ENCODE measurements at regions of chr20 and their contacts with region 1.

Region 1: DNA sequence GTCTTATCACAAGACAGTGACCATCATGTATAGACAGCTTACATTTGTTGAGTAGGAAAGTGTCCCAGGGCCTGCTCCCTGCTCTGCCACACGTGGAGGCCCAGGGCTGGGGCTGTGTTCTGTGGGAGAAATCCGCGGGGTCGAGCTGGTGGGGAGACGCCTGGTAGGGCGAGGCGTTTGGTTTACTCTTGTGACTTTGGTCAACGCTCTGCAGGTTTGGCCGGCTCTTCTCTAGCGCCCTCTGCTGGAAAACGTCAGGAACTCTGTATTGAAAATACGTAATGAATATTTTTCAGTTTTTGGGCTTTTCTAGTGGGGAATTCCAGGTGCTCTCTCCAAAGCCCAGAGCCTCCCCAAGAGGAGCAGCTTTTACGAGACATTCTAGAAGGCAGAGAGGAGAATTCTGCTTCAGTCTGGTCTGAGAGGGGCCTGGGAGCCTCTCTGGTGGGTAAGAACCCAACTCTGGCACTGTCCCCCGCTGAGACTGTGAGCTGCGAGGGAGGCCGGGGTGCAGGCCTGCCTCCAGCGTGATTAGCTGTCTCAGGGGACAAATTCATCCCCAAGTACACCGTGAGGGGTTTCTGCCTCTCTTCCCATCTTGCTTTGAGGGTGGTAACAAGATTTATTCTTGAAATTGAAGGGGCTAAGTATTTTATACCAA is 112.6 kb upstream of the RALGAPA2 start:
- DNase-seq: peak; percentile 2
- ATAC-seq: peak; percentile 53
- H3K4me3 ChIP-seq: no peak overlapping the region
- H3K27ac ChIP-seq: no peak overlapping the region
- H3K4me1 ChIP-seq: no peaks in the 10 kb centered on the region
- H3K27me3 ChIP-seq: no peaks in the 10 kb centered on the region
- CTCF ChIP-seq: peak; percentile 58
- POLR2A ChIP-seq: no peak
- RAD21 ChIP-seq: peak; percentile 36

Region 2: DNA sequence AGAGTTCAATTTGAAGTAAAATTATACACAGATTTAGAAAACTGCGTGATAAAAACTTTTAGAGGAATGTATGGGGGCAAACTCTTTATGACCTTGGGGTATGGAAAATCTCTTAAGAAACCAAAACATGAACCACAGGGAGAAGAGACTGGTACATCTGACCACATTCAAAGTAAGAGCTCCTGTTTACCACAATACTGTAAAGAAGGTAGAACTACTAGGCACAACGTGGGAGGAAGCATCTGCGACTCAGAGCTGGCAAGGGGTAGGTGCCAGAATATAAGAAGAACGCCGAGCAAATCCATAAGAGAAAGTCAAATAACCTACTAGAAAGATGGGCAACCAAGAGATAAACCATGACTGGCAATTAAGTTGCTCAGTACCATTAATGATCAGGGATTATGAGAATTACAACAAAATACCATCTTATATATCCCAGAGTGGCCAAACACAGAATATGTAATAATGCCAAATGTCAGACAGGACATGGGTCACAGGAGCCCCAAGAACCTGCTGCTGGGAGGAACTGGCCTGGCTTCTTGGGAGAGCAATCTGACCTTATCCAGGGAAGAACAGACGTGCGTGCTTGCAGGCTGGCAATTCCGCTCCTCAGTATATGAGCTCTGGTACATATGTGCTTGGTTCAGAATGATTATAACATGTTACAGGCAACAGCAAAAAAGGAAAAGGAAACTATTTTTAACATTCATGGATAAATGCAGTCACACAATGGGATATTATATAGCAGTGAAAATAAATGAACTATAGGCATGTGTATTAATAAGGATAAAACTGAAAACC is 407.0 kb before region 1 on chr20:
- CTCF ChIA-PET with region 1: no interaction called
- POLR2A ChIA-PET with region 1: no interaction called
- dilution Hi-C with region 1: no loop called
- in situ Hi-C with region 1: no loop called
- intact Hi-C with region 1: no loop called
- DNase-seq: no peak
- ATAC-seq: no peak
- H3K4me3 ChIP-seq: no peak overlapping the region
- H3K27ac ChIP-seq: no peak overlapping the region
- H3K4me1 ChIP-seq: no peaks in the 10 kb centered on the region
- H3K27me3 ChIP-seq: no peaks in the 10 kb centered on the region; the same call in 1 of the 2 replicates
- CTCF ChIP-seq: no peak
- POLR2A ChIP-seq: no peak
- RAD21 ChIP-seq: no peak

Region 3: DNA sequence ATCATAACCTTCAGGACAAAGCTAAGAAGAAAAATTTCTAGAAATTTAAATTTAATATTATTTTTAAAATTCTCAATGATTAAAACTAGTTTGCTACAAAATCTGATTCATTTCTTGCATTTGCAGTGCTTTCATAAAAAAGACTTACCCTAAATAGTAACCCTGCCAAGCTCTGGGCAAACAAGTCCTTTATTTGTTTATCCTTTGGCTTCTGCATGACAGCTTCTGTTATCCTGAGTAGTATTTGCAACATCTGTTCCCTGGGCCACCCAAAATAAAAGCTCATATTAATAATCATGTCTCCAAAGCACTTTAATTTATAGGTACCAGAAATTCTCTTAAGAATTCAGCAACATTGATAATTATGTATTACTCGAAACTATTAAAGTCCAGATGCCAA is 213.9 kb before region 1 on chr20:
- CTCF ChIA-PET with region 1: no interaction called
- POLR2A ChIA-PET with region 1: no interaction called
- dilution Hi-C with region 1: no loop called
- in situ Hi-C with region 1: no loop called
- intact Hi-C with region 1: loop called (anchors 10 kb)
- DNase-seq: no peak
- ATAC-seq: no peak
- H3K4me3 ChIP-seq: no peak overlapping the region
- H3K27ac ChIP-seq: no peak overlapping the region
- H3K4me1 ChIP-seq: peaks cover 3% of the 10 kb centered on the region; the same call in 1 of the 2 replicates
- H3K27me3 ChIP-seq: no peaks in the 10 kb centered on the region
- CTCF ChIP-seq: no peak
- POLR2A ChIP-seq: no peak
- RAD21 ChIP-seq: no peak

Region 4: GRCh38 chr20:20664795-20665589 is 160.1 kb before region 1 on chr20:
- CTCF ChIA-PET with region 1: no interaction called
- POLR2A ChIA-PET with region 1: no interaction called
- dilution Hi-C with region 1: no loop called
- in situ Hi-C with region 1: no loop called
- intact Hi-C with region 1: loop called (anchors 1 kb)
- DNase-seq: no peak
- ATAC-seq: peak; percentile 46; the same call in 1 of the 2 replicates
- H3K4me3 ChIP-seq: no peak overlapping the region
- H3K27ac ChIP-seq: no peak overlapping the region
- H3K4me1 ChIP-seq: no peaks in the 10 kb centered on the region
- H3K27me3 ChIP-seq: no peaks in the 10 kb centered on the region
- CTCF ChIP-seq: peak; percentile 26; the same call in 1 of the 2 replicates
- POLR2A ChIP-seq: no peak
- RAD21 ChIP-seq: peak; percentile 22; the same call in 1 of the 2 replicates

Measured in IMR-90 (cell line).